Activated CD4-positive, alpha-beta memory T cell treated with anti-CD3 and anti-CD28 coated beads, Interleukin-2, amount 10 ng/mL, durations not matched to agents 7 days and 5 days (primary cell): ENCODE measurements at regions of chr20 and their contacts with region 1.

Region 1: DNA sequence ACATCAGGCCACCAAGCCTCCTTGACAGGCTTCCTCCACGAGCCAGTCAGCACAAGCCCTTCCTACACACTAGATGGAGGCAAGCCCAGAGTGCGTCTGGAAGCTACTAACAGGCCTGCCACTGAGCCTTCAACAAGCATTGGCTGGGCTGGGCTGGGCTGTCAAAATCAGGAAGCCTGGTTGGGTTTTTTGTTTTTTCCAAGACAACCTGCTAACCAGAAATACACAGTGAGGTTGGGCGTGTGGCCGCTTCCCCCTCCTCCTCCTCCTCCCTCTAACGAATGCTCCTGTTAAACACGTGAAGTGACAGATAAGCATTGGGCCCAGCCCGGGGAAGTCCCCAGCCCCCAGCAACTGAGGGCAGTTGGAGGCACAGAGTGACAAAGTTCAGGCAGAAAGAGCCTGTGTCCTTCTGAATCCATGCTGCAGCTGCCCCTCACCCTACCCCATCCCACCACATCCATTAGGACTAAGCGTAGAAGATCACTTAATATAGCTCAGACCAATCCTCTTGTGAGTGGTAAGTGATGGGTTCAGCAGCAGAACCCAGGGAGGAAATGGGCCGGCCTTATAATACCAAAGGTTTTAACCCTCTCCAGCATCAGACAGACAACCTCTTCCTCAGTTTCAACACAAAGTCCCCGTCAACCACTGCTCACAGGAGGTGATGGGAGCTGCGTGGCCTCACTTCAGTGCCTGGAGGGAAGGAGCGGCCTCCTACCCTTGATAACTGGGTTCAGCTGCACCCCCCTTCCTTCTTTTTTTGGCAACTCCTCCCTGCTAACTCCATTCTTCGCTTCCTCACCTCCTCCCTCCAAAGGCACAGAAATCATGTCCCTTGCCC is 1.1 kb downstream of the NFATC2 start:
- DNase-seq: peak; percentile 90
- H3K4me3 Mint-ChIP-seq: peak overlapping the region; percentile 99
- H3K27ac Mint-ChIP-seq: peak overlapping the region; percentile 99
- H3K4me1 Mint-ChIP-seq: peaks cover 53% of the 10 kb centered on the region
- H3K27me3 Mint-ChIP-seq: peaks cover 27% of the 10 kb centered on the region

Region 2: GRCh38 chr20:51303731-51304680 is 237.4 kb before region 1 on chr20:
- CTCF ChIA-PET with region 1: no interaction called
- POLR2A ChIA-PET with region 1: no interaction called
- DNase-seq: no peak
- H3K4me3 Mint-ChIP-seq: no peak overlapping the region
- H3K27ac Mint-ChIP-seq: no peak overlapping the region
- H3K4me1 Mint-ChIP-seq: peaks cover 2% of the 10 kb centered on the region
- H3K27me3 Mint-ChIP-seq: peaks cover 8% of the 10 kb centered on the region

Region 3: GRCh38 chr20:51404298-51405060 is 136.9 kb before region 1 on chr20:
- CTCF ChIA-PET with region 1: interaction called, 3 read pairs
- POLR2A ChIA-PET with region 1: interaction called, 26 read pairs
- DNase-seq: peak; percentile 95
- H3K4me3 Mint-ChIP-seq: peak overlapping the region; percentile 15
- H3K27ac Mint-ChIP-seq: peak overlapping the region; percentile 98
- H3K4me1 Mint-ChIP-seq: peaks cover 93% of the 10 kb centered on the region
- H3K27me3 Mint-ChIP-seq: no peaks in the 10 kb centered on the region

Region 4: DNA sequence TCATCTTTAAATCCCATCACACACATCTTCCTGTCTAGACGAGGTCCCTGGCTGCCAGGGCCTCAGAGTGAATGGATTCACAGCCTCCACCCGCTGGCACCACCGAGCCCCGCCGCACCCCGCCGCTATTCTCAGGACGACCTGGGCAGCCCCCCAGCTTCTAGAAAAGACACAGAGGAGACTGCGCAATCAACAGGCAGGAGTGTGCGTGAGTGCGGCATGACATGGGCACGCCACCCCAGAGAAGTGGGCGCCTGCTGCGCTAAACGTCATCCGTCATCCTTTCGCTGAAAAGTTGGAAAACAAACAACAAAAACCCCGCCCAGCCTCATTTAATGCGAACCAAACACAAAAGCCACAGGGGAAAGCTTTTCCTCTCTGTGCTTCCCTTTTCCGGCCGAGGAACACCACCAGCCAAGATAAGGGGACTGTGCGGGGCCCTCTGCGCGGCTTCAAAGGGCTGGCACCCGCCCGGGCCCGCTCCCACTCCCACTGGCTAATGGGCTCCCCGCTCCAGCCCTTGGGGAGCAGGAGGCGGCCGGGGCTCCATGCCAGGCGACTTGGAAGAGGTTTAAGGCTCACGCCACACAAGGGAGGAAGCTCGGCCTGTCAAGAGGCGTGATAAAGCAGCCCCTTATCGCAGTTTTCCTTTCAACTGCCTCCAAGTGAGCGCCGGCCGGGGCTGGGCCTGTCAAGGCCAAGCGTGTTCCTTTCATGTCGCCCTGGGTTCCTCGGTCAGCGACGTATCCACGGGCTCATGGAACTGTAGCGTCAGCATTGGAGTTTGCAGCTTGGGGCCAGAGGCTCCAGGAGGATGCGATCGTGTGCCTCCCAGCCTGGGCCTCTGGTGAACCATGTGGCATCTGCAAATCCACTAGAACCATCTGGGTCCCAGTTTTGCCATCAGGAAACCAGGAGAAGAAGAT is 49.0 kb before region 1 on chr20:
- CTCF ChIA-PET with region 1: no interaction called
- POLR2A ChIA-PET with region 1: interaction called, 11 read pairs
- DNase-seq: no peak
- H3K4me3 Mint-ChIP-seq: no peak overlapping the region
- H3K27ac Mint-ChIP-seq: no peak overlapping the region
- H3K4me1 Mint-ChIP-seq: peaks cover 82% of the 10 kb centered on the region
- H3K27me3 Mint-ChIP-seq: no peaks in the 10 kb centered on the region

Region 5: GRCh38 chr20:51512645-51513044 is 28.8 kb before region 1 on chr20:
- CTCF ChIA-PET with region 1: interaction called, 4 read pairs
- POLR2A ChIA-PET with region 1: interaction called, 27 read pairs
- DNase-seq: no peak
- H3K4me3 Mint-ChIP-seq: no peak overlapping the region
- H3K27ac Mint-ChIP-seq: peak overlapping the region; percentile 80
- H3K4me1 Mint-ChIP-seq: peaks cover 74% of the 10 kb centered on the region
- H3K27me3 Mint-ChIP-seq: no peaks in the 10 kb centered on the region

Region 6: DNA sequence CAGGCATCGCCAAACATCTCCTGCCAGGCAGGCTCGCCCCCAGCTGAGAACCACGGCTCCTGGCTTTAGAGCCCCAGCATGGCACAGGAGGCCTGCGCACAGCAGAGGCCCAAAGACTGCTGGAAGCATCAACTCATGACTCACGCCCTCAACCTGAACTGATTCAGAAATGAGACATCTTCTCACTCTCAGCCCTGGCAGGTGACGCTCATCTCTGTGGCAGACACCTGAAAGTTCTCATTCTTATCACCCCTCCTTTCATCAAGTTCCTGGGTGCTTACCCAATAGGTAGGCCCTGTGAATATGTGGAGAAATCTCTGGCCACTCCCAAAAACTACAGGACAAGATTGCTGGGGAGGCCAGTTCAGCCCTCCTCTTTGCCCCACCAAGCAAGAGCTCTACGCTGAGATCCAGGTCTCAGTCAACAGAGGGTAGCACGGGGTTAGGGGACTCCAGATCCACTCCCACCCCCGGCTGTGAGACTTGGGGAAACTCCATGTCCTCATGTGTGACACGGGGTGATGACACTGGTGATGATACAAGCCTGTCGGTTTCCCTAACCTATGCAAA is 10.2 kb before region 1 on chr20:
- CTCF ChIA-PET with region 1: interaction called, 19 read pairs
- POLR2A ChIA-PET with region 1: interaction called, 56 read pairs
- DNase-seq: peak; percentile 75
- H3K4me3 Mint-ChIP-seq: peak overlapping the region; percentile 61
- H3K27ac Mint-ChIP-seq: peak overlapping the region; percentile 91
- H3K4me1 Mint-ChIP-seq: peaks cover 96% of the 10 kb centered on the region
- H3K27me3 Mint-ChIP-seq: no peaks in the 10 kb centered on the region

Region 7: GRCh38 chr20:51789434-51789833 is 248.0 kb after region 1 on chr20:
- CTCF ChIA-PET with region 1: no interaction called
- POLR2A ChIA-PET with region 1: no interaction called
- DNase-seq: no peak
- H3K4me3 Mint-ChIP-seq: no peak overlapping the region
- H3K27ac Mint-ChIP-seq: no peak overlapping the region
- H3K4me1 Mint-ChIP-seq: no peaks in the 10 kb centered on the region
- H3K27me3 Mint-ChIP-seq: no peaks in the 10 kb centered on the region